Left ventricle myocardium superior (tissue), 1 donor: ENCODE measurements at regions of chr2 and their contacts with region 1.

Region 1: GRCh38 chr2:12719400-12720277 is 2.9 kb downstream of the TRIB2 start:
- DNase-seq: no peak
- ATAC-seq: no peak

Region 2: DNA sequence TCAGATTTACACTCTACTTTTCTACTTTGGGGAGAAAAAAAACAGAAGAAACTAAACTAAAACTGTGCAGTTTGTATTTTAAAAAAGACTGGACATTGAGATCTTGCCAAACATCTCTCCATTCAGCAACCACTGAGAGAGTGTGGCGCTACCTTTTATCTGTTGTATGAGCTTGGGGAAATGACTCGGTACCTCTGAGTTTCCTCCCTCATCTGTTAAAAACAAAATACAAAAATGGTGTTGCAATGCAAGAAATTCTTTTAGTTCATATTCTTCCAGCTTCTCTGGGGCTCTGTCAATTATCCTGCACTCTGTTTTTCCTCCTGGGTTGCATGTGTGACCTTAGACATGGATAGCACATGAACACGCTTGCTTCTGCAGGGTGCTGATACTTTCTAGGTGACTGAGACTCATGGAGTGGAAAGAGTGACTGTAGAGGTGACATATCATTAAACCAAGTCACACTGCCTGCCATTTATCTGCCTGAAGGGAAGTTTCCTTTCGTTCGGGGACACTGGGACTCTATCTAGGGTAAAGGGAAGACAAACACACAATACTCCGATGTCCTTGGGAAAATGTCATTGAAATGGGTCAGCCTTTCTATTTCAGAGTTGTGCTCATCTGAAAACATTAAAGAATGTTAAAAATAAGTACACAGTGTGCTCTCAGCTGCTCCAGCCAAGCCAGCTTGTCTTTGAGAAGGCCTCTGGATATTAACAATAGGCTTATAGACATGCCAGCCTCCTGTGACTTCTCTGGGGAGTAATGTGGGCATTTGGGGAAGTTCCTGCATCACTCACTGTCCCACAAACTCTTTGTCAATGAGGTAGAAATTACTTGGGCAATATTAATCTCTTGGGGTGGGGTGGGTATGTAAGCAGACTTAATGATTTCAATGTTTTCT is 88.5 kb after region 1 on chr2:
- intact Hi-C with region 1: no loop called
- DNase-seq: no peak
- ATAC-seq: peak; percentile 90

Region 3: DNA sequence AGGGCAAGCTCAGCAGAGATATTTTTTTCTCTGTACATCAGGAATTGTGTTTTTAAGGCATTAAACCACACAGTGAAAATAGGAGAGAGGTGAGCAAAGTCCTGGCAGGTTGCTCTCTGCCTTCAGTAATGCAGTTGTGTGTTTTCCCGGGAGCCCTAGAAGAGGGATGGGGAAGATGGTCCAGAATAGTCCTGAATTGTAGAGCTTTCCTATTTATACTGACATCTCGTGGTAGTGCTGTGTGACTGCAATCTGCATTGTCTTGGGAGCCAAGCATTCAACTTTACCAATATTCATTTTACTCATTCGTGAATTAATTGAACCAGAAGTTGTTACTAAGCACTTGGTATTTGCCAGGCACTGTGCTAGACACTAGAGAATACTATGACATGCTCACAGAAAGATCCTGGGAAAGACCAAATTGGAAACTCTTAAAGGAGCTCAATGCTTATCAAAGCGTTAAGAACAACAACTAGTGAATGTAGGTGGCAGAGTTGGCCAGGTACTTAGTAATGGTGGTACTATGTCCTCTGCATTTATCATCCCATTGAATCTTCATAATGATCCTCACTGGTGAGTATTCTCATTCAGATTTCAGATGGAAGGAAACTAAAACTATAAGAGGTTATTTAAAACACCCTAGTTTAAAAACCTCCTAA is 211.7 kb after region 1 on chr2:
- intact Hi-C with region 1: loop called (anchors 5 kb)
- DNase-seq: no peak
- ATAC-seq: peak; percentile 91